ENCODE measurements at regions of chr10 and their contacts with region 1.

Region 1: DNA sequence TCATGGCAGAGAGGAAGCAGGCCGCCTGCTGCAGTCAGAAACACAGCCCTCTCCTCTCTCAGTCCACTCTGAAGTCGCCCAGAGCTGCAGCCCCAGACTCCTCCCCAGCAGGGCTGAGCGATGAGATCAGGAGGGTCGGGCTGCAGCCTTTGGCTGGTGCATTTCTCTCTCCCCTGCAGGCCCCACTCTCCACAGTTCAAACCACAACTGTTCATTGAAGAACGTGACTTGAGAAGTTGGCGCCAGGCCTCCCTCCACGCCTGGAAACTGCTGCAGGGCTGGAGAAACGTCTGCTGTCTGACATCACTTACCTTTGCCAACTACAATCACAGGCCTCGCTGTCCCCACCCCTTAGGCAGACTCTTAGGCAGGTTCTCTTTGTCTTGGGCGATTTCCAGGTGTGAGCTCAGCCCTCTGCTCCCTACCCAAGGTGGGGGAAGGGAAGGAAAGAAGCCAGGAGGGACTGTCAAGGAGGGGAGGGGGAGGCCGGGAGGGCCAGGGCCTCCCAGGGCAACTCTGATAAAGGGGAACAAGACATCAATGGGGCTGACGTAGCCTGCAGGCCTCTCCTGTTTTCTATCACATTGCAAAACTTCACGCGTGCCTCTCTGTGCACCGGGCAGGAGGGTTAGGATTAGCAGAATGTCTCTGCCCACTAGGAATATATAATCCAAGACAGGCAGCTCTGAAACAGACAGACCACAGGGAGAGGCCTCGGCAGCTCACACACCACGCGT is 32.8 kb downstream of the CALML5 start:
- DNase-seq: peak; percentile 88
- H3K4me3 ChIP-seq: no peak overlapping the region
- H3K27ac ChIP-seq: peak overlapping the region; percentile 66 to 85 (median 78)
- H3K4me1 ChIP-seq: peaks cover 0 to 48% (median 39%) of the 10 kb centered on the region in 4 donors
- H3K27me3 ChIP-seq: no peaks in the 10 kb centered on the region
- CTCF ChIP-seq: no peak
- EP300 ChIP-seq: peak in 1 of 4 donors; percentile 47
- POLR2A ChIP-seq: no peak

Region 2: GRCh38 chr10:5216801-5217200 is 249.8 kb before region 1 on chr10:
- intact Hi-C with region 1: no loop called
- DNase-seq: no peak
- H3K4me3 ChIP-seq: no peak overlapping the region
- H3K27ac ChIP-seq: no peak overlapping the region
- H3K4me1 ChIP-seq: no peaks in the 10 kb centered on the region
- H3K27me3 ChIP-seq: no peaks in the 10 kb centered on the region
- CTCF ChIP-seq: no peak
- EP300 ChIP-seq: no peak
- POLR2A ChIP-seq: no peak

Region 3: GRCh38 chr10:5534880-5535856 is 68.6 kb after region 1 on chr10:
- intact Hi-C with region 1: loop called (anchors 5 kb)
- DNase-seq: peak; percentile 56
- H3K4me3 ChIP-seq: no peak overlapping the region
- H3K27ac ChIP-seq: peak overlapping the region in 2 of 4 donors; percentile 30 to 55
- H3K4me1 ChIP-seq: peaks cover 0 to 56% (median 31%) of the 10 kb centered on the region in 4 donors
- H3K27me3 ChIP-seq: no peaks in the 10 kb centered on the region
- CTCF ChIP-seq: no peak
- EP300 ChIP-seq: no peak
- POLR2A ChIP-seq: no peak

Region 4: GRCh38 chr10:5548527-5549223 is 82.1 kb after region 1 on chr10:
- intact Hi-C with region 1: loop called (anchors 5 kb)
- DNase-seq: peak; percentile 52
- H3K4me3 ChIP-seq: no peak overlapping the region
- H3K27ac ChIP-seq: peak overlapping the region; percentile 79 to 84 (median 81)
- H3K4me1 ChIP-seq: peaks cover 0 to 56% (median 44%) of the 10 kb centered on the region in 4 donors
- H3K27me3 ChIP-seq: no peaks in the 10 kb centered on the region
- CTCF ChIP-seq: no peak
- EP300 ChIP-seq: no peak
- POLR2A ChIP-seq: peak in 1 of 2 donors; percentile 17